ENCODE measurements at regions of chr17 and their contacts with region 1.

Region 1: DNA sequence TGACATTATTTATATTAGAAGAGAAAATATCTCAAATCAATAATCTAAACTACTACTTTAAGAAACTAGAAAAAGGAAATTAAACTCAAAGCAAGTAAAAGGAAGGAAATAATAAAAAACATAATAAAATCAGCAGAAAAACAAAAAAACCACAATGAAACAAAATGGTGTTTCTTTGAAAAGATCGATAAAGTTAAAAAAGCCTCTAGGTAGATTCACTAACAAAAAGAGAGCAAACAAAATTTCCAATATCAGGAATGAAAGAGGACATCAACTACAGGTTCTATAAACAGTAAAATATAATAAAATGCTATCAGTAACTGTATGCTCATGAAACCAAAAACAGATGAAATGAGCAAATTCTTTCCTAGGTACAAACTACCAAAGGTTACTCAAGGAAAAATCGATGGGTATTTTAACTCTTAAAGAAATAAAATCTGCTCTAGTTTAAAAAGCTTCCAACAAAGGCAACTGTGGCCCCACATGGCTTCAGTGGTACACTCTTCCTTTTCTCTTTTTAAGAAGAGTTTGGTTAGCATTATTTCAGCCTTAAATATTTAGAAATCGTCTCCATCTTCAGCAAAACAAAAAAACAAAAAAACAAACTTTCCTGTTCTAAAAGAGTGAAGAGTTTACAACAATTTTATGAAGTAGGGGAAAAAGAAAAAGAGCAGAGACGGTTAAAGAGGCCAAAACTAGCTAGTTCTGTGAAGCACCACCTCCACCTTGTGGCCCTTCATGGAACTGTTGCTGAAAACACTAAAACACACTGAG is 102.2 kb downstream of the TRIM37 start:
- DNase-seq: peak; percentile 78
- ATAC-seq: peak; percentile 47
- H3K4me3 Mint-ChIP-seq: no peak overlapping the region
- H3K27ac Mint-ChIP-seq: peak overlapping the region; percentile 58
- H3K4me1 Mint-ChIP-seq: peaks cover 28% of the 10 kb centered on the region
- H3K27me3 Mint-ChIP-seq: no peaks in the 10 kb centered on the region

Region 2: GRCh38 chr17:58517734-58518609 is 486.6 kb before region 1 on chr17:
- CTCF ChIA-PET with region 1: interaction called, 31 read pairs
- POLR2A ChIA-PET with region 1: interaction called, 3 read pairs
- DNase-seq: peak; percentile 100
- ATAC-seq: peak; percentile 86
- H3K4me3 Mint-ChIP-seq: peak overlapping the region; percentile 89
- H3K27ac Mint-ChIP-seq: peak overlapping the region; percentile 97
- H3K4me1 Mint-ChIP-seq: peaks cover 51% of the 10 kb centered on the region
- H3K27me3 Mint-ChIP-seq: no peaks in the 10 kb centered on the region

Region 3: DNA sequence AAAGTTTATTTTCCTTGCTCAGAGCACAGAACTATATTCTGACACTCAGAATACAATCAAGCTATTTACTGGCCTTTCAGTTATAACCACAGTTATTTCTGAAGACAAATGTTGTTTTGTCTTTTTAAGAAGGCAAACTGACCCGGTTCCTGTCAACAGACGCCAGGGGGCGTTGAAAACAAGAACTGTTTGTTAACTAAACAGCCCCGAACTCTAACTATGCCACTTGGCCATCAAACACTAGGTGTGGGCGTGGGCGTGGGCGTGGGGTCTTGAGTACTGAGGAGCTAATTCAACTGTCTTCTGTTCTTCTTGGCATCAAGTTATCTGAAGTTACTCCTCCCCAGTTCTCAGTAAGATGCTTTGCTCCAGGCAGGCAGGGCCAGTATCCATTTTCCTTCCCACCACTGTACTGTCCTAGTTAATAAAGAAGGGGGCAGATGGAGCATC is 426.9 kb before region 1 on chr17:
- CTCF ChIA-PET with region 1: interaction called, 20 read pairs
- POLR2A ChIA-PET with region 1: no interaction called
- DNase-seq: peak; percentile 66
- ATAC-seq: no peak
- H3K4me3 Mint-ChIP-seq: no peak overlapping the region
- H3K27ac Mint-ChIP-seq: no peak overlapping the region
- H3K4me1 Mint-ChIP-seq: peaks cover 9% of the 10 kb centered on the region
- H3K27me3 Mint-ChIP-seq: peaks cover 11% of the 10 kb centered on the region

Region 4: GRCh38 chr17:58587702-58588254 is 416.7 kb before region 1 on chr17:
- CTCF ChIA-PET with region 1: interaction called, 20 read pairs
- POLR2A ChIA-PET with region 1: no interaction called
- DNase-seq: peak; percentile 66
- ATAC-seq: peak; percentile 76
- H3K4me3 Mint-ChIP-seq: no peak overlapping the region
- H3K27ac Mint-ChIP-seq: no peak overlapping the region
- H3K4me1 Mint-ChIP-seq: no peaks in the 10 kb centered on the region
- H3K27me3 Mint-ChIP-seq: peaks cover 10% of the 10 kb centered on the region

Region 5: DNA sequence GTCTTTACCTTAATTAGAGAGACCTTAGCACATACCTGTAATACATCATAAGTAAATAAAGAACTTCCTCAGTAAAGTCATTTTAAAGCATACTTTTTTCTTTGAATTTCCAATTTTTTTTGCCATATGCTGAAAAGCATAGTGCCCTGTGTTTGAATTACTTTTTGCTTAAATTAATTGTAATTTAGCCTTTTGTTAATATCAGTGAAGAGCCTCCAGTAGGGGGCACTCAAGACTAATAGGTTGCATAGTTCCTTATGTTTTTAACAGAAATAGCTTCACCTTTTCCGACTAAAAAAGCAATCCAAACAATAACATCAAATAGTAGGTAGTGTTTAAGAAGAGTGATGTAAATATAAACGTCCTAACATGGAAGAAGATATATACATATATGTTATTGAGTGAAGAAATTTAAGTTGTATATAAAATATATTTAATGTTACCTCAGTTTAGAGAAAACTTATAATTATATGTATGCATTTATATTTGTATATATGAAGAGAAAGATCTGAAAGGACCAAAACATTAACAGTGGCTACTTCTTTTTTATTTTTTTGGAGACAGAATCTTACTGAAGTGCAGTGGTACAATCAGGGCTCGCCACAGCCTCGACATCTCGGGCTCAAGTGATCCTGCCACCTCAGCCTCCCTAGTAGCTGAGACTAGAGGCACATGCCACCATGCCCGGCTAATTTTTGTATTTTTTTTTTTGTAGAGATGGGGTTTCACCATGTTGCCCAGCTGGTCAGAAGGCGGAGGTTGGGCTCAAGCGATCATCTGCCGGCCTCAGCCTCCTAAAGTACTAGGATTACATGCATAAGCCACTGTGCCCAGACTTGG is 293.4 kb before region 1 on chr17:
- CTCF ChIA-PET with region 1: interaction called, 36 read pairs
- POLR2A ChIA-PET with region 1: no interaction called
- DNase-seq: peak; percentile 57
- ATAC-seq: no peak
- H3K4me3 Mint-ChIP-seq: no peak overlapping the region
- H3K27ac Mint-ChIP-seq: no peak overlapping the region
- H3K4me1 Mint-ChIP-seq: peaks cover 14% of the 10 kb centered on the region
- H3K27me3 Mint-ChIP-seq: no peaks in the 10 kb centered on the region

Region 6: GRCh38 chr17:58943848-58944565 is 60.5 kb before region 1 on chr17:
- CTCF ChIA-PET with region 1: no interaction called
- POLR2A ChIA-PET with region 1: no interaction called
- DNase-seq: no peak
- ATAC-seq: no peak
- H3K4me3 Mint-ChIP-seq: no peak overlapping the region
- H3K27ac Mint-ChIP-seq: no peak overlapping the region
- H3K4me1 Mint-ChIP-seq: no peaks in the 10 kb centered on the region
- H3K27me3 Mint-ChIP-seq: peaks cover 12% of the 10 kb centered on the region

Region 7: GRCh38 chr17:59027750-59028149 is 23.2 kb after region 1 on chr17:
- CTCF ChIA-PET with region 1: no interaction called
- POLR2A ChIA-PET with region 1: no interaction called
- DNase-seq: no peak
- ATAC-seq: no peak
- H3K4me3 Mint-ChIP-seq: no peak overlapping the region
- H3K27ac Mint-ChIP-seq: no peak overlapping the region
- H3K4me1 Mint-ChIP-seq: no peaks in the 10 kb centered on the region
- H3K27me3 Mint-ChIP-seq: no peaks in the 10 kb centered on the region

Measured in activated CD8-positive, alpha-beta T cell treated with anti-CD3 and anti-CD28 coated beads, Interleukin-2, amount 10 ng/mL, durations not matched to agents 7 days and 5 days (primary cell).